ENCODE measurements at regions of chr7 and their contacts with region 1.

Region 1: DNA sequence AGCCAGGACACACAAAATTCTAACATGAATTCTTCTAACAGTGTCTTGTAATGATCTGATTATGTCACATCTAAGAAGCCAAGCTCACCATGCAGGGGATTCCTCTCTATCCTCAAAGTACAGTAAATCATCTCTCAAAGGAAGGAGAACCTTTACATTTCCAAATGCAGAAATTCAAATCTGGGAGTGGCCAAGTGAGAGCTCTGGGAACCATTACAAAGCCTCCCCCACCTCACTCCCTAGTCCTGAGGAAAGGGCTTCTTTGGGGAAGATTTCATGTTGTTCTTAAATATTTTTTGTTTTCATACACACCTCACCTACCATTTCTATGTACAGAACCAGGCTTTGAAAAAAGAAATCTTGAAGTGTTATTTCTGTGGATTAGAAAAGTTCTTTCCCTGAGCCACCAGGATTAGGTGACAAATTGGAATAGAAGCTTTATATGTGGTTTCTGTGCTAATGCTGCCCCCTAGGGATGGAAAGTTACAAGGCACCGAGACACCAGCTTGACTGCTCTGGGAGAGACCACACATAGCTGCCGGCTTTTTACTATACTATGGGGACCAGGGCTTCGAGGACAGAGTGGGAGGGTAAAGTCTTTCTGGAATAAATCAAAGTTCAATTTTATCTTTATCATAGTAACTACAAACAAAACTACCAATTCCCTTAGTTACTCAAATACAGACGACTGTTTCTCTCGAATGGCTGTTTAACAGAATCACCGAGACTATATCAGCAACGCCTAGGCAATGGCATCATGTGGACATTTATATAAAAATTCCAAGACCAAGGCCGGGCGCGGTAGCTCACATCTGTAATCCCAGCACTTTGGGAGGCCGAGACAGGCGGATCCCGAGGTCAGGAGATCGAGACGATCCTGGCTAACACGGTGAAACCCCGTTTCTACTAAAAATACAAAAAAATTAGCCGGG is 116.1 kb downstream of the RNF216 start:
- DNase-seq: peak; percentile 77

Region 2: DNA sequence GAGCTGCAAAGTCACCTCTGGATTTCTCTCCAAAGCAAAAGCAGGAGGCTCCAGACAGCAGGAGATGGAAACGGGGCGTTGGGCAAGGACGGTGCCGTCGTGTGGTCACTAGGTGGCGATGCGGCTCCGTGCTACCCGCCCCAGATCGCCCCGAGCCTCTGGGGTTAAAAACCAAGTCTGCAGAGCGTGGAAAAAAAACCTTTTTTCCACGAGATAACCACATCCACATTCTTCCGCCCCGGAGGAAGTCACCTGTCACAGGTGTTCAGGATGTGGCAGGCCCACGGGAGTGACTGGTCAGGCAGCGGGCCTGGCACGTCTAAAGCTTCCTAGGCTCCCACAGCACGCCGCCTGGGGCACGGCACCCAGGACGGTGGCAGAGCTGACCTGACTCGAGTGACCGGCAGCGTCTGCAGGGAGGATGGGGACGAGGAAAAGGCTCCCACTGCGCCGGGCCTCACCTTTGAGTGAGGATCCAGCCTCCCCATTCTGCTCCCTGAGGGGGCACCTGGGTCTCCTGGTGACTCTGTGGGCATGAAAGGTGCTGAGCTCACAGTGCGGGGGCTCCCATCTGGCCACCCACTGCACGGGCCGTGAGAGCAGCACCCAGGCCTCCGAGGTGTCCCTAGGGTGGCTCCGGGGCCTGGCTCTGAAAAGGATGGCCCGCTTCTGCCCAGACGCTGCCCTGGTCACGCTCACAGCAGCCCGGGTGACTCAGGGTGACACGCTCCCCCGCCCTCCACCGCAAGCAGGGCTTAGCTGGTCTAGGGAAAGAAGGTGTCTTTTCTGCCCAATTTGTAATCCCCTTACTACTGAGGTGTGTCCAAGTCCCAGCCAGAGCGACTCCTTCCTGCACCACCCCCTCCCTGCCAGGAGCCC is 170.4 kb before region 1 on chr7:
- CTCF ChIA-PET with region 1: interaction called, 19 read pairs
- POLR2A ChIA-PET with region 1: no interaction called
- DNase-seq: peak; percentile 83

Region 3: GRCh38 chr7:5649641-5650040 is 15.7 kb before region 1 on chr7:
- CTCF ChIA-PET with region 1: no interaction called
- POLR2A ChIA-PET with region 1: no interaction called
- DNase-seq: no peak

Region 4: GRCh38 chr7:5677538-5678294 is 12.4 kb after region 1 on chr7:
- CTCF ChIA-PET with region 1: interaction called, 10 read pairs
- POLR2A ChIA-PET with region 1: interaction called, 3 read pairs
- DNase-seq: peak; percentile 65